Endothelial cell of umbilical vein (primary cell): ENCODE measurements at regions of chr2 and their contacts with region 1.

Region 1: GRCh38 chr2:71331581-71332434 is at the start of gene ZNF638:
- DNase-seq: peak; percentile 94
- H3K4me3 ChIP-seq: peak within 1 kb of the TSS; percentile 66 to 98 (median 81)
- H3K27ac ChIP-seq: peak within 1 kb of the TSS; percentile 70
- H3K4me1 ChIP-seq: peaks cover 14% of the 10 kb centered on the region
- H3K27me3 ChIP-seq: no peaks in the 10 kb centered on the region
- CTCF ChIP-seq: peak; percentile 81 to 84
- POLR2A ChIP-seq: peak; percentile 89
- total RNA-seq, gene ZNF638: 109 and 111 TPM in 2 replicates

Region 2: GRCh38 chr2:71157124-71157793 is 174.5 kb before region 1 on chr2:
- CTCF ChIA-PET with region 1: interaction called, 11 read pairs
- POLR2A ChIA-PET with region 1: no interaction called
- dilution Hi-C with region 1: no loop called
- intact Hi-C with region 1: loop called (anchors 5 kb)
- DNase-seq: peak; percentile 42
- H3K4me3 ChIP-seq: no peak overlapping the region
- H3K27ac ChIP-seq: no peak overlapping the region
- H3K4me1 ChIP-seq: no peaks in the 10 kb centered on the region
- H3K27me3 ChIP-seq: peaks cover 0 to 7% of the 10 kb centered on the region in 2 experiments
- CTCF ChIP-seq: peak; percentile 57 to 85
- POLR2A ChIP-seq: no peak

Region 3: DNA sequence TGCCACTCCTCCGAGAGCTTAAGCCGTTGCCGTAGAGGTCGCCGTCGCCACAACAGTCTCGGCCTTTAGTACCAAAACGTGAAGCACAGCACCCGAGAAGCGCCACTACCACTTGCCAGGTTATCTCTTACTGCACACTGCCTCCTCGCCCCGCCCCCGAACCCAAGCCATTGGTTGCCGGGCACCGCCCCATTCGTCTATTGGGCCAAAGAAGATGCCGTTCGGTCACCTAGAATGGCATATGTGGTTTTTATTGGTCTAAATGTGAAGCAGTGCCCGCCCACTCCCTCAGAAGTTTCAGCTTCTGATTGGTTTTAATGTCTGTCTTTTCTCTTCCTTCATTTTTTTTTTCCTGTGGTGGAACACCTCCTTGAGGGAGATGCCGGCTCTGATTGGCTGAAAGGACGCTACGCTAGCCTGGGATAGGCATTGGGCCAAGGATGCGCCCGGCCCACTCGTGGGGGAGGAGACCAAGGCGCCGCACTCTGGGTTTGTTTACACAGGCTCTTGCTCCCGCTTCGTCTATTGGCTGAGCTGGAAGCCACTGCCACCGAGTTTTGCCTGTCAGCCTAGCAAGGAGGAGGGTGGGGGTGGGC is 104.7 kb before region 1 on chr2 and contains the start of gene PAIP2B:
- CTCF ChIA-PET with region 1: interaction called, 10 read pairs
- POLR2A ChIA-PET with region 1: no interaction called
- dilution Hi-C with region 1: no loop called
- intact Hi-C with region 1: loop called (anchors 10 kb)
- DNase-seq: peak; percentile 100
- H3K4me3 ChIP-seq: peak within 1 kb of the TSS; percentile 46 to 59 (median 52)
- H3K27ac ChIP-seq: no peak within 1 kb of the TSS
- H3K4me1 ChIP-seq: peaks cover 10% of the 10 kb centered on the region
- H3K27me3 ChIP-seq: peaks cover 13 to 26% of the 10 kb centered on the region in 2 experiments
- CTCF ChIP-seq: no peak
- POLR2A ChIP-seq: no peak
- total RNA-seq, gene PAIP2B: 0.58 and 0.62 TPM in 2 replicates

Region 4: GRCh38 chr2:71276311-71277146 is 55.3 kb before region 1 on chr2:
- CTCF ChIA-PET with region 1: interaction called, 6 read pairs
- POLR2A ChIA-PET with region 1: no interaction called
- dilution Hi-C with region 1: no loop called
- intact Hi-C with region 1: loop called (anchors 2 kb)
- DNase-seq: peak; percentile 93
- H3K4me3 ChIP-seq: peak overlapping the region; percentile 57 to 82 (median 65)
- H3K27ac ChIP-seq: no peak overlapping the region
- H3K4me1 ChIP-seq: peaks cover 14% of the 10 kb centered on the region
- H3K27me3 ChIP-seq: peaks cover 3 to 11% of the 10 kb centered on the region in 2 experiments
- CTCF ChIP-seq: peak in 1 of 2 donors; percentile 12
- POLR2A ChIP-seq: peak; percentile 44

Region 5: DNA sequence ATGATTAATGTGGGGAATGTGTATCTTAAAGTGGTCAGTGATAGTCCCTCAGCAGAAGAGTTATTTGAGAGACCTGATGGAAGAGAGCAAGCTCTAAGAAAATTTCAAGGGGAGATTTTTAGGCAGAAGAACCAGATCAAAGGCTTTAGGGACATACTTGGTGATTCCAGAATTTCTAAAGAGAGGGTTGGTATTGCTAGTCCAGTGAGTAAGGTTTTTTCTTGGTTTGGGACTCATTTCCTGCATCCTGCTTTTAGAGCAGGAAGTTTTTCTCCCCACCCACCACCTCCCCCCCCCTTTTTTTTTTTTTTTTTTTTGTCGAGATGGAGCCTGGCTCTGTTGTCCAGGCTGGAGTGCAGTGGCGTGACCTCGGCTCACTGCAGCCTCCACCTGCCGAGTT is 78.9 kb after region 1 on chr2:
- CTCF ChIA-PET with region 1: no interaction called
- POLR2A ChIA-PET with region 1: no interaction called
- dilution Hi-C with region 1: no loop called
- intact Hi-C with region 1: no loop called
- DNase-seq: peak; percentile 5
- H3K4me3 ChIP-seq: no peak overlapping the region
- H3K27ac ChIP-seq: peak overlapping the region; percentile 24
- H3K4me1 ChIP-seq: peaks cover 8% of the 10 kb centered on the region
- H3K27me3 ChIP-seq: no peaks in the 10 kb centered on the region
- CTCF ChIP-seq: no peak
- POLR2A ChIP-seq: no peak

Region 6: DNA sequence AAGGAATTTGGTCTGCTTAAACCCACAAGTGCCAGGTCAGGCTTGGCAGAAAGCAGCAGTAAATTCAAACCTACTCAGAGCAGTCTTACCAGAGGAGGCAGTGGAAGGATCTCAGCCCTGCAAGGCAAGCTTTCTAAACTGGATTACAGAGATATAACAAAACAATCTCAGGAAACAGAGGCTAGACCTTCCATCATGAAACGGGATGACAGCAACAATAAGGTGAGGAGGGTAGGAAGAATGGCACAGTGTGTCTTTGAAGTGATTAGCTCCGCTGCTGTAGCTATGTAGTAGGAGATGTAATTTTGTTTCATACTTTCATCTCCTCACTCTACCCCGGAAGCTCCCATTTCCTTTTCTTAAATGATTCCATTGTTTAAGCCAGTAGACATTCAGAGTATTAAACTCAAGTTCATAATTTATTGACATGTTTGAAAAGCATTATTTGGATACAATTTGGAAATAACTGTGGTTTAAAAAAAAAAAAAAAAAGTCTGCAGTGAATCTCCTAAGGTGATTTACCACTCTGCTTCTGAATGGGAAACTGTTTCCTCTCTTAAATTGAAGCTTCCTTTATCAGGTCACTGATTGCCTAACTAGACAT is 92.1 kb after region 1 on chr2:
- CTCF ChIA-PET with region 1: interaction called, 5 read pairs
- POLR2A ChIA-PET with region 1: no interaction called
- dilution Hi-C with region 1: no loop called
- intact Hi-C with region 1: loop called (anchors 5 kb)
- DNase-seq: peak; percentile 91
- H3K4me3 ChIP-seq: peak overlapping the region in 1 of 3 experiments; percentile 13
- H3K27ac ChIP-seq: peak overlapping the region; percentile 78
- H3K4me1 ChIP-seq: peaks cover 37% of the 10 kb centered on the region
- H3K27me3 ChIP-seq: no peaks in the 10 kb centered on the region
- CTCF ChIP-seq: peak in 1 of 2 donors; percentile 15
- POLR2A ChIP-seq: peak; percentile 52

Region 7: DNA sequence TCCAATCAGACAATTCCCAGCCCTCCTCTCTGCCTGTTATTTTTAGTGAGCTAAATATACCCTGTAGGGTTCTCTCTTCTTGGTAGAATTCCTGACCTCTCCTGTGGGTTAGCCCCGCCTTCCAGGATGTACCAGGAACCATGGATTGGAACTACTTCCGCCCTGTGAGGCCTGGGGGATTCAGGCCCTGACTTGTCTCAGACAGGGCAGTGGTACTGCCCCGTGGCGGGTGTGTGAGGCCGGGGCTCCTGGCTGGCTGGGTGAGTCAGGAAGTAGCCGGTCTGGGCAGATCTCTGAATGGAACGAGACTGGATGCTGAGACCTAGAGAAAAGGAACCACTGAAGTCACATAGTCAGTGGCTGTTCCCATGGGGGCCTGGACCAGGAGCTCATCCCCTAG is 172.0 kb after region 1 on chr2:
- CTCF ChIA-PET with region 1: interaction called, 3 read pairs
- POLR2A ChIA-PET with region 1: no interaction called
- dilution Hi-C with region 1: no loop called
- intact Hi-C with region 1: loop called (anchors 5 kb)
- DNase-seq: peak; percentile 62
- H3K4me3 ChIP-seq: no peak overlapping the region
- H3K27ac ChIP-seq: peak overlapping the region; percentile 85
- H3K4me1 ChIP-seq: peaks cover 54% of the 10 kb centered on the region
- H3K27me3 ChIP-seq: no peaks in the 10 kb centered on the region
- CTCF ChIP-seq: no peak
- POLR2A ChIP-seq: peak; percentile 70